Activated naive CD4-positive, alpha-beta T cell treated with anti-CD3 and anti-CD28 coated beads for 36 hours (primary cell): ENCODE measurements at regions of chr15 and their contacts with region 1.

Region 1: GRCh38 chr15:60507596-60508424 is 28.9 kb upstream of the ICE2 start:
- DNase-seq: peak; percentile 70
- H3K4me3 Mint-ChIP-seq: no peak overlapping the region
- H3K27ac Mint-ChIP-seq: peak overlapping the region; percentile 68
- H3K4me1 Mint-ChIP-seq: peaks cover 48% of the 10 kb centered on the region
- H3K27me3 Mint-ChIP-seq: no peaks in the 10 kb centered on the region

Region 2: DNA sequence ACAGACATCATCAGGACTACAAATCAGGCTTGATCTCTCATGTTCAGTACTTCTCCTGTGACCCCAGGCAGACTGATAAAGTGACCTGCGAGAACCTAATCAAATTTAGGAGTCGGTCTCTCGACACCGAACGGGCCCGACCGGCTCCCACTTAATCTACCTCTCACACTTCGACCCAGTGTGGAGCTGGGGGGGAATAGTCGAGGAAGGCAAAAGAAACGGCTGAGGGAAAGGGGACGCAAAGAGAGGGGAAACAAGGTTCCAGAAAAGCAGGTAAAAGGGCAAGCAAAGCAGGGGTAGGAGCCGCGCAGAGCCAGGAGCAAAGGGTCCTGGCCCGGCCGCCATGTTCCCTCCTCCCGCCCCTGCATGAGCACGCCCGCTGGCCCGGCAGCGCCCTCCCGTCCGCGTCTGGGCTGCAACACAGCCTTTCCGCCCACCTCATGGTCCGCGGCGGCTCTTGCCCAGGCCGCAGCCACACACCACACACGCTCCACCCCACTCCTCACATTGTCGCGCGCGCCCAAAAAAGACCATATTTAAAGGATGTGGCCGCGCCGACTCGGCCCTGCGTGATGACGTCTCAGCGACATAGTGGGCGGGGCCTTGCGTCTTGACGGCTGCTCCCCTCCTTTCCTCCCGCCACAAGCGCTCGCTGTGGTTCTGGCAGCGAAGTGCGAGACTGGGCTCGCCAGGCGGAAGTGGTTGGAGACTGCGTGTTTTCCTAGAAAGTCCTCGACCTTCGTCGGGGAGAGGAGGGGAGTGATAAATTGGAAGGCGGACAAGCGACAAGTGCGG is 29.0 kb before region 1 on chr15 and contains the start of gene ICE2:
- CTCF ChIA-PET with region 1: interaction called, 6 read pairs
- intact Hi-C with region 1: loop called (anchors 1 kb)
- DNase-seq: peak; percentile 98
- H3K4me3 Mint-ChIP-seq: peak within 1 kb of the TSS; percentile 93
- H3K27ac Mint-ChIP-seq: peak within 1 kb of the TSS; percentile 94
- H3K4me1 Mint-ChIP-seq: peaks cover 44% of the 10 kb centered on the region
- H3K27me3 Mint-ChIP-seq: no peaks in the 10 kb centered on the region
- total RNA-seq, gene ICE2: 75.2 to 76.7 TPM

Region 3: DNA sequence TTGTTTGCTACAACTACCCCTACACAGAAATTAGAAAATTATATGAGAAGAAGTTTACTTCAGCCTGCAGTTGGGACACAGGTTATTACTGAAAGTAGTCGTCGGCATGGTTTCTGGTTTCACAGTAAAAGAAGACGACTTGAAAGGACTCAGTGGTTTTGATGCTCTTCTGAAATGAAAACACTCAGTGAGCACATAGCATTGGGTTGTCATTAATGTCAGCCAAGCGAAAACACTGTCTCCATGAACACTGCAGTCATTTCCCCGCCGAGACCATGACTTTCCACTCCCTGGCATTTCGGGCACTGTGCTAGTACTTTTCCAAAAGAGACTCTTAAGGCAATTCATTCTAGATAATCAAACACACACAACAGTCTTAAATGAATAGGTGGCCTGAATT is 40.3 kb after region 1 on chr15:
- CTCF ChIA-PET with region 1: interaction called, 5 read pairs
- intact Hi-C with region 1: loop called (anchors 1 kb)
- DNase-seq: peak; percentile 83
- H3K4me3 Mint-ChIP-seq: peak overlapping the region; percentile 39
- H3K27ac Mint-ChIP-seq: peak overlapping the region; percentile 80
- H3K4me1 Mint-ChIP-seq: peaks cover 92% of the 10 kb centered on the region
- H3K27me3 Mint-ChIP-seq: no peaks in the 10 kb centered on the region

Region 4: GRCh38 chr15:60859996-60860494 is 352.2 kb after region 1 on chr15:
- CTCF ChIA-PET with region 1: no interaction called
- intact Hi-C with region 1: loop called (anchors 1 kb)
- DNase-seq: no peak
- H3K4me3 Mint-ChIP-seq: no peak overlapping the region
- H3K27ac Mint-ChIP-seq: peak overlapping the region; percentile 69
- H3K4me1 Mint-ChIP-seq: peaks cover 68% of the 10 kb centered on the region
- H3K27me3 Mint-ChIP-seq: no peaks in the 10 kb centered on the region

Region 5: GRCh38 chr15:61057376-61057775 is 549.6 kb after region 1 on chr15:
- CTCF ChIA-PET with region 1: no interaction called
- intact Hi-C with region 1: loop called (anchors 2 kb)
- DNase-seq: peak; percentile 19
- H3K4me3 Mint-ChIP-seq: no peak overlapping the region
- H3K27ac Mint-ChIP-seq: peak overlapping the region; percentile 32
- H3K4me1 Mint-ChIP-seq: peaks cover 11% of the 10 kb centered on the region
- H3K27me3 Mint-ChIP-seq: no peaks in the 10 kb centered on the region